ENCODE measurements at regions of chr15 and their contacts with region 1.

Region 1: DNA sequence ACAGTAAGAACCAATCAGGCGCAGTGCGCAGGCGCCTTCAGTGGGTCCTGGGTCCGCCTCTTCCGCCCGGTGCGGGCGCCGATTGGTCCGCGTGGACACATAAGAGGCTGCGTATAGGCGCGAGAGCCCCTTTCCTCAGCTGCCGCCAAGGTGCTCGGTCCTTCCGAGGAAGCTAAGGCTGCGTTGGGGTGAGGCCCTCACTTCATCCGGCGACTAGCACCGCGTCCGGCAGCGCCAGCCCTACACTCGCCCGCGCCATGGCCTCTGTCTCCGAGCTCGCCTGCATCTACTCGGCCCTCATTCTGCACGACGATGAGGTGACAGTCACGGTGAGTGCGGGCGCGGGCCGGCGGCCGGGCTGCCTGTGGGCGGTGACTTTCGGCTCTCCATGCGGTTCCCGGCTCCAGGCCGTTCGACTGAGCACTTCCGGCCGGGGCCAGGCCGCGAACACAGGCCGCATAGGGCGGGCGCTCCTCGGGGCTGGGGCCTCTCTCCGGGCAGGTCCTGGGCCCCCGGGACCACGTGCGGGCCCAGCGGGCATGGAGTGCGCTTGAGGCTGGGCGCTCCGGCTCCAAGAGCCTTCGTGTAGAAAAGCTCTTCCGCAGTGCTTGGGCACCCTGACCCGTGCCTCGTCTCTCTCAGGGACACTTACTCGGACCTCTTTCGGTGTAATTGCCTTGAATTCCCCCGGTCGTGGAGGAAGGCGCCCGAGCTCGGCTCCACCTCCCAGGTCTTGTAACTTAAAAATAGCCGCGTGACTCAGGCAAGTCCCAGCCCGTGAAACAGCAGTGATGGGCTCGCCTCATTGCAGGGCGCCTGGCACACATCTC is at the start of gene RPLP1:
- DNase-seq: peak; percentile 97
- ATAC-seq: peak; percentile 95
- H3K4me3 Mint-ChIP-seq: peak within 1 kb of the TSS; percentile 99
- H3K27ac Mint-ChIP-seq: peak within 1 kb of the TSS; percentile 99
- H3K4me1 Mint-ChIP-seq: peaks cover 24% of the 10 kb centered on the region
- H3K27me3 Mint-ChIP-seq: no peaks in the 10 kb centered on the region
- CTCF ChIP-seq: no peak
- total RNA-seq, gene RPLP1: 2,583 to 2,701 TPM

Region 2: GRCh38 chr15:69413822-69414700 is 38.8 kb before region 1 on chr15 and contains the start of gene KIF23:
- CTCF ChIA-PET with region 1: interaction called, 4 read pairs
- POLR2A ChIA-PET with region 1: interaction called, 25 read pairs
- intact Hi-C with region 1: no loop called
- DNase-seq: peak; percentile 95
- ATAC-seq: peak; percentile 94
- H3K4me3 Mint-ChIP-seq: peak within 1 kb of the TSS; percentile 81
- H3K27ac Mint-ChIP-seq: peak within 1 kb of the TSS; percentile 70
- H3K4me1 Mint-ChIP-seq: peaks cover 14% of the 10 kb centered on the region
- H3K27me3 Mint-ChIP-seq: peaks cover 8% of the 10 kb centered on the region
- CTCF ChIP-seq: no peak
- total RNA-seq, gene KIF23: 45.4 to 47.0 TPM

Region 3: GRCh38 chr15:69424748-69425413 is 28.0 kb before region 1 on chr15:
- CTCF ChIA-PET with region 1: interaction called, 3 read pairs
- POLR2A ChIA-PET with region 1: interaction called, 21 read pairs
- intact Hi-C with region 1: no loop called
- DNase-seq: no peak
- ATAC-seq: no peak
- H3K4me3 Mint-ChIP-seq: no peak overlapping the region
- H3K27ac Mint-ChIP-seq: no peak overlapping the region
- H3K4me1 Mint-ChIP-seq: no peaks in the 10 kb centered on the region
- H3K27me3 Mint-ChIP-seq: no peaks in the 10 kb centered on the region
- CTCF ChIP-seq: no peak

Region 4: DNA sequence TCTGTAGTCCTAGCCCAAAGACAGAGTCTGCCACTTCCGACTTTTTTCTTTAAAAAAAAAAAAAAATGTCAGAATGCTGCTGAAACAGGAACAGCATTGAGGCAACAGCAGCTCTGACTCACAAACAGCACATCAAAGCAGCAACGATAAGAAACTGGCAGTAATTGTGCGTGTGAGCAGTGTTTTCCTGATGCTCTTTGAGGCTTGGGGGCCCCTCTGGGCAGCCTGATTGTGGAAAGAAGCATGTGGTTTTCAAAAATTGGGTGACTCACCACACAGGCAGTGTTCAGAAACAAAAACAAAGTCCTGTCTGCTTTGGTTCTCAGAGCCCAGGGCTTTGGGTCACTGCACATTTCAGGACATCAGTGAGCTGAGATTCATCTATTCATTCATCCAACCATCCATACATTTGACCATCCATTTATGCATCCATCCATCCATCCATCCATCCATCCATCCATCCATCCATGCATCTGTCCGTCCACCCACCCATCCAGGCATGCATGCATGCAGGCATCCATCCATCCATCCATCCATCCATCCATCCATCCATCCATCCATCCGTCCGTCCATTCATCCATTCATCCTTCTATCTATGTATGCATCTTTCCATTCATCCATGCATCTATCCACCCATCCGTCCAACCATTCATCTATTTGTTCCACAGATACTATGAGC is 308.1 kb after region 1 on chr15:
- CTCF ChIA-PET with region 1: no interaction called
- POLR2A ChIA-PET with region 1: interaction called, 10 read pairs
- intact Hi-C with region 1: no loop called
- DNase-seq: peak; percentile 92
- ATAC-seq: peak; percentile 50
- H3K4me3 Mint-ChIP-seq: peak overlapping the region; percentile 16
- H3K27ac Mint-ChIP-seq: peak overlapping the region; percentile 83
- H3K4me1 Mint-ChIP-seq: peaks cover 68% of the 10 kb centered on the region
- H3K27me3 Mint-ChIP-seq: peaks cover 1% of the 10 kb centered on the region
- CTCF ChIP-seq: no peak

Measured in activated CD8-positive, alpha-beta T cell treated with anti-CD3 and anti-CD28 coated beads for 36 hours (primary cell).